Ascending aorta (tissue), 2 donors: ENCODE measurements at regions of chr18 and their contacts with region 1.

Region 1: DNA sequence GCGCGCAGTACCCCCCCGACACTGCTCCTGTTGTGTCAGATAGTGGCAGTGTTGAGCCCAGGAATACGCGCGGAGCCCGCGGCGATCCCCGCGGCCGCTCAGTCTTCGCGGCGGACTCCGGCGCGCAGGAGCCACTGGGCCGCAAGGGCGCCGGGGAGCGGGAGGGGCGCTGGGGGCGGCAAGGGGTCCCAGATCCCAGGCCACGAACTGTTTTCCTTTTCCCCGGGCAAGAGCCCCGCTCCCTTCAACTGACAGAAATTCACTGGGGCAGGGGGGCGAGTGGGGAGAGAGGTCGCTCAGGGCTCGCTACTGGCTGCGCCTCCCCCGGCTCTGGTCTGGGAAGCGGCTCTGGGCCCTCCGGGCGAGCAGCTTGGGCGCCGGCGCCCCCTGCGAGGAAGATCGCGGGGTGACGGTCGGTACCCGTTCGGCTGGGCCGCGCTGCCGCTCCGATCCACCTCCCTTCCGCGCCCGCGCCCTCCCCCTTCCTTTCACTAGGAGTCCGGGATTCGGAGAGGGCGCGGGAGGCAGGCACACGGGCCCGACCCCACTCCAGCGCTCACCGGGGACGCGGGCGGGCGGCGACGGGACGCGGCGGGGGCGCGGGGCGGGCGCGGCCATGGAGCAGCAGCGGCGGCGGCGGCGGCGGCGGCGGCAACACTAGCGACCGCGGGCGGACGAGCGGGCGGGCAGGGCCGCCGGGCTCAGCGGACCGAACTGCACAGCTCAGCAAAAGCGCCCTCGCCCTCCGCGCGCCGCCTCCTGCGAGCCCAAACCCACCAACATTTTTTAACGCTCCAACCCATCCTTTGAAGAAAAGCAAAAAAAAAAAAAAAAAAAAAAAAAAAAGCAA is 1.4 kb upstream of the SETBP1 start:
- DNase-seq: peak; percentile 63 to 90
- H3K4me3 ChIP-seq: peak overlapping the region; percentile 83 to 94
- H3K27ac ChIP-seq: peak overlapping the region; percentile 97 to 98
- H3K4me1 ChIP-seq: peaks cover 0 to 17% of the 10 kb centered on the region in 2 donors
- H3K27me3 ChIP-seq: no peaks in the 10 kb centered on the region
- CTCF ChIP-seq: peak; percentile 62 to 81 (median 68)

Region 2: DNA sequence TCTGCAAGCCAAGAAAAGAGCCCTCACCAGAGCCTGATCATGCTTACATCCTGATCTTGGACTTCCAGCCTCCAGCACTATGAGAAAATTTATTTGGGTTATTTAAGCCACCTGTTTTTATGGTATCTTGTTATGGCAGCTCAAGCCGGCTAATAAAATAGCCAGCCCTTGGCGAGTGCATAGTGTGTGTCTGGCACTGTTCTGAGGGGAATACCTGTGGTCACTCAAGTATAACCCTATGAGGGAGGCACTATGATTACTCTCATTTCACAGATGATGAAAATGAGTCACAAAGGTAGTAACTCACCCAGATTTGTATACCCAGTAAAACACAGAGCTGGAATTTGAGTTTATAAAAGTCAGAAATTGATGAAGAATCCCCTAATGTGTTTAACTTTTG is 555.5 kb before region 1 on chr18:
- intact Hi-C with region 1: loop called (anchors 10 kb)
- DNase-seq: no peak
- H3K4me3 ChIP-seq: no peak overlapping the region
- H3K27ac ChIP-seq: no peak overlapping the region
- H3K4me1 ChIP-seq: no peaks in the 10 kb centered on the region
- H3K27me3 ChIP-seq: no peaks in the 10 kb centered on the region
- CTCF ChIP-seq: no peak

Region 3: DNA sequence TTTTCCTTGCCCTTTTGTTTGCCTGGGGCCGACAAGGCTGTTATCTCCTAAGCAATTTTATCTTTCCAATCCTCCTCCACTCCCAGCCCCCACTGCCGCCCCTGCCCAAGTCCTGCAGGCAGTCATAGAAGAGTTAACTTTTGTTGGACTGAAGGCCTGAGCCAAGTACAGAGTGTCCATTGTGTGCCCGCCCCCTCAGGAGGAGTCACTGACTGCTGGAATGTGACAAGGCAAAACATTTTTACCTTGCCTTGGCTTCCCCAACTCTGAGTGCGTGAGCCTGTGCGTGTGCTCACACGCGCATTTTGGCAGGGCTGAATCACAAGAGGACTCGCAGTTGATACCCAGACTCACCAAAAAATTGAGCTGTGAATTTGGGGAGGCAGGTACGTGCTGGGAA is 17.6 kb after region 1 on chr18:
- intact Hi-C with region 1: loop called (anchors 2 kb)
- DNase-seq: no peak
- H3K4me3 ChIP-seq: no peak overlapping the region
- H3K27ac ChIP-seq: peak overlapping the region in 1 of 2 donors; percentile 3
- H3K4me1 ChIP-seq: peaks cover 3 to 17% of the 10 kb centered on the region in 2 donors
- H3K27me3 ChIP-seq: no peaks in the 10 kb centered on the region
- CTCF ChIP-seq: no peak

Region 4: DNA sequence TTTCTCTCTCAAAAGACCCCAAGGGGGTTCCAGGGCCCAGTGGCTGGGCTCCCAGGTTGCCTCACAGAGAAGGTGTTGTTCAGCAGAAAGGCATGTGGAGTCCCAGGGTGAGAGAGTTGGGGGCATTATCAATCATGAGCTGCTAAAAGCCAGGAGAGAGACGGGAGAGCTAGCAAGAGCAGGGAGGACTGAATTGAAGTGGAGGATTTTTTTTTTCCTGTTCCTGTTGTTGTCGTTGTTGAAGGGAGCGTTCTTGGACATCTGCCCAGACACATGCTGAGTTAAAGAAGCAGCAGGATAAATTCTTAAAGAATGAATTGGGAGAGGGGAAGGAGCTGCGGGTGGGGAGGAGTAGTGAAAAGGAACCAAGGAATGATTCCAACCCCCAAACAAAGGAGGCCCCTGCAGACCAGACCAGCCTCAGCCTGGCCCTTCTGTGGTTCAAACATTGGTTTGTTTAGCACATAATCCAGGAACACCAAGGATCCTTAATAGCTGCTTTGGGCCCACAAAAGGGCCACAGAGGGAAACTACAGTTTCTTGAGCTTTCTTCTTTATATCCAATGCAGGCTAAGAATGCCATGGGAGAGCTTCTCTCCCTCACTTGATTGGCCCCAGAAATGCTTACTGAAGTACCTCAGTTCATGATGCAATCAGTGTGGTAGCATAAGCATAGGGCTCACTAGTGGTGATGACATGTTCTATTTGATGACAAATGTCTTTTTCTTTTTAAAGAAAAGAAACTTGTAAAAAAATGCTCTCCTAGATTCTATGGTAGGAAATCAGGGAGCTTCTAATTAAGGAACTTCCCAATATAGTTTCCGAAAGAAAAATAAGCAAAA is 147.4 kb after region 1 on chr18:
- intact Hi-C with region 1: loop called (anchors 5 kb)
- DNase-seq: peak; percentile 15 to 85
- H3K4me3 ChIP-seq: no peak overlapping the region
- H3K27ac ChIP-seq: peak overlapping the region; percentile 73 to 83
- H3K4me1 ChIP-seq: peaks cover 6 to 22% of the 10 kb centered on the region in 2 donors
- H3K27me3 ChIP-seq: no peaks in the 10 kb centered on the region
- CTCF ChIP-seq: no peak

Region 5: DNA sequence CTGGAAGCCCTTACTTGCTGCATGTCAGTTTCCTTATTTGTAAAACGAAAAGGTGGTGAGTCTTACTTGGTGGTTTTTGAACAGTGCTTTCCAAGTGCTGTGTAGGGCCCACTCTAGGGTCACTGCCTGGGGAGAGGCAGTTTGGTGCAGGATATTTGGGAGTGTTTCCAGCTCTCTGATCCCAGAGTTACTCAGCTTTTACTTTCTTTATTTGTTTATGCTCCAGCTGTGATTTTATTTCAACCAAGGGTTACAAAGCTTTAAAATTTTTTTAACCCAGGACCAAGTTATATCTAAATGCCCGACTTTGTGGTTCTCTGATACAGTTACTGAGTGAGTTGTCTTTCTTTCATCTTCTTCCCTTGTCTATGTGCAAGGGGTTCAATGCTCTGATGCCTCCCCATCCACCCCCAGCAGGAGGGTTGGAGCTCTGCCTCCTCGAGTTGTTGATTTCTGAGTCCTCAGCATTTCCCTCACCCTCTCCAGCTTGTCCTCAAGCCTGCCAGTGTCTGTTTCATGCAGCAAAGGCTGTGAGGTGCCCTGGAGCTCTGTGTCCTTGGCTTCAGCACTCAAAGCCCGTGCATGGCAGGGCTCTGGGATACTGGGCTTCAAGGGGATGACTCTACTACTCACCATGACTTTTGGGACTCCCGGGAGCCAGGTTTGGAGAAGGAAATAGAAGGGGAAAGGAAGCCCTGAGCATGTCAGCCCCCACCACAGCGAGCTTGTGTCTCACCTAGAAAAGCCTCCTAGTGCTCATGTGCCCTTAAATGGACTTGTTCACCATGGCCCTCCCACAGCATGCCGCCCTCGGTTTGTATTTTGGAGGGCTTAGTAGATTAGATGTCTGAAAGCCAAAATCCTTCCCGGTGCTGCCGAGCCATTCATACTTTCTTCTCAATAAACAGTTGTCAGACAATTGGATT is 238.2 kb after region 1 on chr18:
- intact Hi-C with region 1: loop called (anchors 5 kb)
- DNase-seq: no peak
- H3K4me3 ChIP-seq: no peak overlapping the region
- H3K27ac ChIP-seq: peak overlapping the region; percentile 81 to 89
- H3K4me1 ChIP-seq: peaks cover 13 to 26% of the 10 kb centered on the region in 2 donors
- H3K27me3 ChIP-seq: no peaks in the 10 kb centered on the region
- CTCF ChIP-seq: no peak

Region 6: GRCh38 chr18:45254709-45255082 is 575.4 kb after region 1 on chr18:
- intact Hi-C with region 1: loop called (anchors 5 kb)
- DNase-seq: peak in 1 of 2 donors; percentile 67
- H3K4me3 ChIP-seq: no peak overlapping the region
- H3K27ac ChIP-seq: peak overlapping the region; percentile 62 to 68
- H3K4me1 ChIP-seq: peaks cover 7 to 33% of the 10 kb centered on the region in 2 donors
- H3K27me3 ChIP-seq: no peaks in the 10 kb centered on the region
- CTCF ChIP-seq: no peak